HepG2 (cell line): ENCODE measurements at regions of chr2 and their contacts with region 1.

Region 1: DNA sequence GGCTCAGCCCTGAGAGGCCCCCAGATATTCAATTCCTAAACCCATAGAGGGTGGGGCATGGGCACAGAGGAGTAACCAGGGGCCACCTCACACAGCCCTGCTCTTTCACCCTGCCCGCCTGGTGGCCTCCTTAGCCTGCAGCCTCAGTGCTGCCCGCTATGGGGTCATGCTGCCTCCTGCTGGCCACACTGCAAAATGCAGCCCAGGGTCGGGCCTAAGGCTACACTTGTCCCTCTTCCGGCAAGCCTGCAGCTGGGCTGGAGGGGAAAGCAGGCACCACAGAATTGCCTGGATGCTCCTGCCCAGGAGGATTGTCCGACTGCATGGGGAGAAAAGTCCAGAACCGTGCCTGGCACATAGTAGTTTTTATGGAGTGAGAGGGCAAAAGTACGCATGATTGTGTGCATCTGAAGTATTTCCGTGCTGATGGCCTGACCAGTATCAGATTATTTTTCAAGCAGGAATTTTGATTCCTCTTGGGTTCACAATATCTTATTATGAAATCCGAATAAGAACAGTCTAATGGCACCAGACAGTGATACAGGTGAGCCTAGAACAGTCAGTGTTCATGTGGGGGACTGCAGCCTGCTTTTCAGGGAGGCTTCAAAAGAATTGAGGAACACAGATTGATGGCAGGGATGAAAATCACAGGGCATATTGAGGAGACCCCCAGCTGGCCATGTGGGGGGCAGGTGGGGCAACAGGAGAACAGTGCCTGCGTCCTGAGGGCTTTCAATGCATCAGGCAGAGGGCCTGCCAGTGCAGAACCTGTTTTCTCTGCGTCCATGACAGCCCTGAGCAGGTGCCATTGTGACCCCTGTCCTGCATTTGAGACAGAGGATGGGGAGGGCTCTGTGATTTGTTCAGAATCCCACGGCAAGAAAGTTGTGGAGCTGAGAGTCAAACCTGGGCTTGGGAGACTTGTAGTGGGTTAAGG is 51.2 kb upstream of the ALPP start:
- DNase-seq: peak; percentile 59
- ATAC-seq: peak; percentile 85
- H3K4me3 ChIP-seq: no peak overlapping the region
- H3K27ac ChIP-seq: no peak overlapping the region
- H3K4me1 ChIP-seq: peaks cover 9% of the 10 kb centered on the region
- H3K27me3 ChIP-seq: no peaks in the 10 kb centered on the region
- CTCF ChIP-seq: peak; percentile 93
- EP300 ChIP-seq: no peak
- POLR2A ChIP-seq: no peak
- RAD21 ChIP-seq: peak; percentile 97

Region 2: DNA sequence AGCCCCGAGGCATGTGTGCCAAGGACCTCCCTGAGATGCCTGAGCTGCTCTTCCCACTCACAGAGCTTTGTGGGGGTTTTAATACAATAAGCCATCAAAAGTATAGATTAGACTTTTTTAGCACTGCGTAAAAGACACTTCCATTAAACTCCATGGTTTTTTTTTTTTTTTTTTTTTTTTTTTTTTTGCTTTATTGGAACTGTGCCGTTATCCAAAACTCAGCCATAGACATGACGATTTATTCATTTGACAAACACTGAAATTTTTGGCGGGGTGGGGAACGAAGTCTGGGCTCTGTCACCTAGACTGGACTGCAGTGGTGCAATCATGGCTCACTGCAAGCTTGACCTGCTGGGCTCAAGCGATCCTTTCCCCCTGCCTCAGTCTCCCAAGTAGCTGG is 419.6 kb before region 1 on chr2:
- CTCF ChIA-PET with region 1: interaction called, 13 read pairs
- POLR2A ChIA-PET with region 1: no interaction called
- in situ Hi-C with region 1: loop called (anchors 5 kb)
- intact Hi-C with region 1: loop called (anchors 2 kb)
- DNase-seq: no peak
- ATAC-seq: no peak
- H3K4me3 ChIP-seq: no peak overlapping the region
- H3K27ac ChIP-seq: no peak overlapping the region
- H3K4me1 ChIP-seq: peaks cover 11% of the 10 kb centered on the region
- H3K27me3 ChIP-seq: peaks cover 3 to 36% of the 10 kb centered on the region in 2 experiments
- CTCF ChIP-seq: no peak
- EP300 ChIP-seq: no peak
- POLR2A ChIP-seq: no peak
- RAD21 ChIP-seq: no peak

Region 3: DNA sequence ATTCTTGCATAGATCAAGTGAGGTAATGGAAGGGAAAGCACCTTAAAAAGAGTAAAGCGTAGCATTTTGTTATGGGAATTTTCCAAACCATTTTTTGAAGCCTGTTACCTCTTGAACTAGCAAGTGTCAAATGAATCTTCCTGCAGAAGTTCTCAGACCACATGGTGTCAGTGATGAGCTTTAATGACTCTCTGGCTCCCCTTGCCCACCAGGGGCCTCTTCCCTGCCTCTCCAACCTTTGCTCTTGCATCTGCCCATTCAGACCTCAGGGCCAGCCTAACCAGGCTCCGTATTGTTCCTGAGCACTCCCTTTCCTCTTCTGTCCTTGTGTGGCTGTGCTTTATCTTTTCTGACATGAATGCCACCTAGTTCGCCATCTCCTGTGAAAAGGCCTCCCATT is 210.0 kb before region 1 on chr2:
- CTCF ChIA-PET with region 1: interaction called, 9 read pairs
- POLR2A ChIA-PET with region 1: no interaction called
- in situ Hi-C with region 1: no loop called
- intact Hi-C with region 1: loop called (anchors 1 kb)
- DNase-seq: peak; percentile 72
- ATAC-seq: peak; percentile 99
- H3K4me3 ChIP-seq: no peak overlapping the region
- H3K27ac ChIP-seq: no peak overlapping the region
- H3K4me1 ChIP-seq: peaks cover 13% of the 10 kb centered on the region
- H3K27me3 ChIP-seq: no peaks in the 10 kb centered on the region
- CTCF ChIP-seq: peak; percentile 81
- EP300 ChIP-seq: no peak
- POLR2A ChIP-seq: no peak
- RAD21 ChIP-seq: peak; percentile 81

Region 4: GRCh38 chr2:232142049-232142448 is 185.3 kb before region 1 on chr2:
- CTCF ChIA-PET with region 1: no interaction called
- POLR2A ChIA-PET with region 1: no interaction called
- in situ Hi-C with region 1: loop called (anchors 10 kb)
- intact Hi-C with region 1: loop called (anchors 5 kb)
- DNase-seq: peak; percentile 28
- ATAC-seq: peak; percentile 86
- H3K4me3 ChIP-seq: no peak overlapping the region
- H3K27ac ChIP-seq: no peak overlapping the region
- H3K4me1 ChIP-seq: peaks cover 14% of the 10 kb centered on the region
- H3K27me3 ChIP-seq: no peaks in the 10 kb centered on the region
- CTCF ChIP-seq: peak; percentile 73
- EP300 ChIP-seq: no peak
- POLR2A ChIP-seq: no peak
- RAD21 ChIP-seq: peak; percentile 79; the same call in 1 of the 2 replicates